Common myeloid progenitor, CD34-positive (primary cell): ENCODE measurements at regions of chr11 and their contacts with region 1.

Region 1: GRCh38 chr11:7442588-7443215 is 42.6 kb upstream of the OLFML1 start:
- DNase-seq: peak; percentile 39 to 72 (median 54)
- H3K4me3 ChIP-seq: no peak overlapping the region
- H3K27ac ChIP-seq: no peak overlapping the region
- H3K4me1 ChIP-seq: no peaks in the 10 kb centered on the region
- H3K27me3 ChIP-seq: peaks cover 0 to 5% (median 0%) of the 10 kb centered on the region in 5 experiments

Region 2: GRCh38 chr11:6979365-6979978 is 463.2 kb before region 1 on chr11:
- CTCF ChIA-PET with region 1: no interaction called
- POLR2A ChIA-PET with region 1: no interaction called
- DNase-seq: no peak
- H3K4me3 ChIP-seq: no peak overlapping the region
- H3K27ac ChIP-seq: no peak overlapping the region
- H3K4me1 ChIP-seq: no peaks in the 10 kb centered on the region
- H3K27me3 ChIP-seq: no peaks in the 10 kb centered on the region

Region 3: GRCh38 chr11:7143908-7144307 is 298.8 kb before region 1 on chr11:
- CTCF ChIA-PET with region 1: interaction called, 10 read pairs
- POLR2A ChIA-PET with region 1: no interaction called
- DNase-seq: peak; percentile 16 to 53 (median 40)
- H3K4me3 ChIP-seq: no peak overlapping the region
- H3K27ac ChIP-seq: no peak overlapping the region
- H3K4me1 ChIP-seq: no peaks in the 10 kb centered on the region
- H3K27me3 ChIP-seq: peaks cover 0 to 5% (median 0%) of the 10 kb centered on the region in 5 experiments

Region 4: GRCh38 chr11:7353100-7353499 is 89.6 kb before region 1 on chr11:
- CTCF ChIA-PET with region 1: interaction called, 16 read pairs
- POLR2A ChIA-PET with region 1: no interaction called
- DNase-seq: peak; percentile 25 to 54 (median 43)
- H3K4me3 ChIP-seq: no peak overlapping the region
- H3K27ac ChIP-seq: no peak overlapping the region
- H3K4me1 ChIP-seq: peaks cover 0 to 8% (median 1%) of the 10 kb centered on the region in 4 experiments
- H3K27me3 ChIP-seq: no peaks in the 10 kb centered on the region

Region 5: GRCh38 chr11:7413961-7414915 is 28.5 kb before region 1 on chr11:
- CTCF ChIA-PET with region 1: interaction called, 24 read pairs
- POLR2A ChIA-PET with region 1: no interaction called
- DNase-seq: peak; percentile 18 to 64 (median 64)
- H3K4me3 ChIP-seq: no peak overlapping the region
- H3K27ac ChIP-seq: no peak overlapping the region
- H3K4me1 ChIP-seq: peaks cover 0 to 12% (median 5%) of the 10 kb centered on the region in 4 experiments
- H3K27me3 ChIP-seq: no peaks in the 10 kb centered on the region

Region 6: DNA sequence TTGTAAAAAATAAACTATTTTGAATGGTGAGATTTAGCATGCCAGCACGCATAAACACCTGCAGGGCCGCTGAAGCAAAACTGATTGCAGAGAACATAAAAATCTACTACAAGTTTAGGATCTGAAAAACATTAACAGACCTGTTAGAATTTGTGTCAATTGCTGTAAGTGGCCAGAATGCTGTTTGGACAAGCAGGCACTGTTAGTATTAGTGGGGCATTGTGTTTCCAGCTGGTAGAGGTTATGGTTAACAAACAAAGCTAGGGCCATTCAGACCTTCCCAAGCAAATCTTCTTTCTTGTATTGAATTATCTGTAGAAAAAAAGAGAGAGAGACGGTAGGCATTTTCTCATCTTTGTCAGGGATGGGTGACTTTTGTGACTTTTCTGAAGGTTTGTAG is 15.0 kb before region 1 on chr11:
- CTCF ChIA-PET with region 1: no interaction called
- POLR2A ChIA-PET with region 1: no interaction called
- DNase-seq: no peak
- H3K4me3 ChIP-seq: no peak overlapping the region
- H3K27ac ChIP-seq: no peak overlapping the region
- H3K4me1 ChIP-seq: no peaks in the 10 kb centered on the region
- H3K27me3 ChIP-seq: peaks cover 0 to 5% (median 0%) of the 10 kb centered on the region in 5 experiments

Region 7: DNA sequence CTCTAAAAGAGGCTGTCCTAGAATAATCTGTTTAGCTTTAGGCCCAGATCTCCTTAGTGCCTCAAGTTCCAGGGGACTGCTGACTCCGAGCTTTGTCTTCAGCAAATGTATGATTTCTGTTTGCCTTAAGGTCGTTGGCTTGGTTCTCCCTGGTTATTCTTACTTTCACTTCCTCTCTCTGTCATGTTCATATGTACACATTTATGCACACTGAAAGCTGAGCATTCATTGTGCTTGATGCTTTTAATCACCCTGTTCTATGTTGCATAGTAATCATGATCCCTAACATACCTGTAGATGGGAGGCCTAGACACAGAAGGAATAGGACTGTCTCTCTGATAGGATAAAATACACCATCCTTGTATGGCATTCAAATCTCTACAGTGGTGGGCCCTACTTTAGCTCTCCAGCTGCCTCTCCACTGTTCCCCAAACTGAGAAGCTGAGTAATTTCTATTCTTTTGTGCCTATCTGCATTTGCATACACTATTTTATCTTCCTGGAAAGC is 78.3 kb after region 1 on chr11:
- CTCF ChIA-PET with region 1: no interaction called
- POLR2A ChIA-PET with region 1: no interaction called
- DNase-seq: peak in 1 of 3 donors; percentile 15
- H3K4me3 ChIP-seq: no peak overlapping the region
- H3K27ac ChIP-seq: no peak overlapping the region
- H3K4me1 ChIP-seq: no peaks in the 10 kb centered on the region
- H3K27me3 ChIP-seq: peaks cover 0 to 11% (median under 1%) of the 10 kb centered on the region in 5 experiments